PC-9 (cell line): ENCODE measurements at regions of chr13 and their contacts with region 1.

Region 1: GRCh38 chr13:109998726-109999533 is 212.5 kb upstream of the IRS2 start:
- DNase-seq: peak; percentile 71 to 100
- H3K4me3 ChIP-seq: peak overlapping the region; percentile 1; the same call in 1 of the 2 replicates
- H3K27ac ChIP-seq: peak overlapping the region; percentile 45
- H3K4me1 ChIP-seq: peaks cover 50% of the 10 kb centered on the region
- H3K27me3 ChIP-seq: no peaks in the 10 kb centered on the region
- CTCF ChIP-seq: peak; percentile 33; the same call in 1 of the 2 replicates

Region 2: DNA sequence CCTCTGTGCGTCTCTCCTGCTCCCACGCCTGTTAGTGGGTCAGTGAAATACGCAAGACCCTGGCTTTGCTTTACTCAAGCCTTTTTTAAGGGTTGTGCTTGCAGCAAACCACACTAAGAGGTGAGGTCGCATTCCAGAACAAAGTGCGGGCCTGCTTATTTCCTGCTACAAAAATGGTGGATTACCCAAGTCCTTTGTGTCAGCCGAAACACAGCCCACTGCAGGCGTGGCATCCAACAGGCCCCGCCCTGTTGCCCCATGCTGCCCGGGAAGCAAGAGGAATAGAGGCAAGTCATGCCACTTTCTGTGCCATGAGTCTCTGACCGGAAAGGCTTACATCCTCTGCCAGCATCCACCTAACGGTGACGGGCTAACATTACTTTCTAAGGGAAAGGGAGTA is 204.8 kb before region 1 on chr13:
- CTCF ChIA-PET with region 1: no interaction called
- POLR2A ChIA-PET with region 1: no interaction called
- intact Hi-C with region 1: loop called (anchors 2 kb)
- DNase-seq: peak; percentile 39 to 82
- H3K4me3 ChIP-seq: no peak overlapping the region
- H3K27ac ChIP-seq: peak overlapping the region; percentile 13
- H3K4me1 ChIP-seq: peaks cover 64% of the 10 kb centered on the region
- H3K27me3 ChIP-seq: no peaks in the 10 kb centered on the region
- CTCF ChIP-seq: no peak

Region 3: GRCh38 chr13:109862627-109863026 is 136.3 kb before region 1 on chr13:
- CTCF ChIA-PET with region 1: no interaction called
- POLR2A ChIA-PET with region 1: no interaction called
- intact Hi-C with region 1: loop called (anchors 5 kb)
- DNase-seq: peak in 1 of 2 experiments; percentile 98
- H3K4me3 ChIP-seq: peak overlapping the region; percentile 23; the same call in 1 of the 2 replicates
- H3K27ac ChIP-seq: peak overlapping the region; percentile 81
- H3K4me1 ChIP-seq: peaks cover 79% of the 10 kb centered on the region
- H3K27me3 ChIP-seq: no peaks in the 10 kb centered on the region
- CTCF ChIP-seq: no peak

Region 4: DNA sequence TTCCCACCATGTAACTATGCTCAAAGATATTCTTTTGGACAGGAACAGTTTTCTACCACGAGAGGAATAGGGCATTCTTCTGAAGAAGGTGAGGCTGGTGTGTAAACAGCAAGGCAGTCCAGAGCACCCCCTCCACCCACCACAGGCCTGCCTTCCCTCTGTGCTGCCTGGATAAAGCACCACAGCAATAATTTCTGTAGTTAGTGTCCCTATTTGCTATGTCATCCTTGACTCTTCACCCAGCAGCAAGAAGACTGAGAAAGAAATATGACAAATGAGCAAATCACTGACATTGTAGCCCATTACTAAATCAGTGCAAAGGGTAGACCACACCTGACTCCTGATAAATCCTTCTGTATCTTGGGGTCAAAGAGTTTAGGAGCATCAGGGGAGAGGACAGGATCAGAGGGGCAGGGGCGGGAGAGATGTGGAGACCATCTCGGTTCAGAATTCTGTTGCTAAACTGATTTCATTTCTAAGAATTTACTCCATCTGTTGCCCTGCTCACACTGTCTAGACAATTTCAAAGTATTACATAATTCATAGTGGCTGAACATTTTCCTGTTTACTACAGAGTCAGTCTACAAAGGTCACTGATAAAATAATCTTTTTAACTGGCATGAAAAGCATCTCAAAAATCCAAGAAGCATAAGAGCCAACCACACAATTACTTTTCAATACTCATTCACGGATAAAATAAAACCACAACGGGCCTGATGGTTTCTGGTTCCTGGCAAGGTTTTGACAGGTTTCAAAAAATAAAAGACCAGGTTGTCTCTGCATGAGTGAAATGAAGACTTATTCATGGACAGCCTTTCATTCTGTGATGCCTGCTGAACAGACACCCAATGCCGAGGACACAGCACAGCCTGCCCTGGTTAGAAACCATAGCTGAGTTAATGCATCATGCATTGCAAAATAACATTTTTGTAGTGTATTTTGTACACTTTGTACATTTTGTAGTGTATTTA is 124.2 kb before region 1 on chr13:
- CTCF ChIA-PET with region 1: no interaction called
- POLR2A ChIA-PET with region 1: no interaction called
- intact Hi-C with region 1: loop called (anchors 1 kb)
- DNase-seq: peak; percentile 32 to 90
- H3K4me3 ChIP-seq: peak overlapping the region; percentile 4; the same call in 1 of the 2 replicates
- H3K27ac ChIP-seq: peak overlapping the region; percentile 84
- H3K4me1 ChIP-seq: peaks cover 76% of the 10 kb centered on the region
- H3K27me3 ChIP-seq: no peaks in the 10 kb centered on the region
- CTCF ChIP-seq: no peak

Region 5: DNA sequence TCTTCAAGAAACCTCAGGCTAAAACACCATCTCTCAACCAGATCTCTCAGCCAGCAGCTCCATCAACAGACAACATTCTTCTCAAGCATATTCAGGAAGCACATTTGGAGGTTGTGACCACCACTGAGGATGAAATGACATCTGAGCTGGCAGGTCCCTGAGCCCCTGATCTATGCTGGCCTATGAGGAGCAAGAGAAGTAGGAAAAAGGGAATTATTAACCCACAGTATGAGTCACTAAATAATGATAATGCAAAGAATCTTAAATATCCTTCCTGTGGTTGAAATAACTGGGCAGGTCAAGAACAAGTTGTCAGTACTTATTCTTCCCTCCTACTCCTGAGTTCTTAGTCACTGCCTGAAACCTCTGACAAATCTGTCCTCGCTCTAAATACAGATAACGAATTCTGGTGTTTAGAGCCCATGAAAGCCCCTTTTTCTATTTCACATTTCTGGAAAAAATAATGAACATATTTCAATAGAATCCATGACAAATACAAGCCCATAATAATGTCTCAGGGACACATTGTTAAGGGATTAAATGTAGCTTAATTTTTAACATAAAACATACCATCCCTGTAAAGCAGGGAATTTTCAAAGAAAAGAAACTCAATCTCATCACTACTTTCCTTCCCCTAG is 13.3 kb after region 1 on chr13:
- CTCF ChIA-PET with region 1: no interaction called
- POLR2A ChIA-PET with region 1: no interaction called
- intact Hi-C with region 1: loop called (anchors 1 kb)
- DNase-seq: peak; percentile 77 to 99
- H3K4me3 ChIP-seq: 0 out of 2 replicates have a peak overlapping the region, but pooled peaks have one; percentile 4
- H3K27ac ChIP-seq: peak overlapping the region; percentile 91
- H3K4me1 ChIP-seq: peaks cover 49% of the 10 kb centered on the region
- H3K27me3 ChIP-seq: no peaks in the 10 kb centered on the region
- CTCF ChIP-seq: no peak

Region 6: DNA sequence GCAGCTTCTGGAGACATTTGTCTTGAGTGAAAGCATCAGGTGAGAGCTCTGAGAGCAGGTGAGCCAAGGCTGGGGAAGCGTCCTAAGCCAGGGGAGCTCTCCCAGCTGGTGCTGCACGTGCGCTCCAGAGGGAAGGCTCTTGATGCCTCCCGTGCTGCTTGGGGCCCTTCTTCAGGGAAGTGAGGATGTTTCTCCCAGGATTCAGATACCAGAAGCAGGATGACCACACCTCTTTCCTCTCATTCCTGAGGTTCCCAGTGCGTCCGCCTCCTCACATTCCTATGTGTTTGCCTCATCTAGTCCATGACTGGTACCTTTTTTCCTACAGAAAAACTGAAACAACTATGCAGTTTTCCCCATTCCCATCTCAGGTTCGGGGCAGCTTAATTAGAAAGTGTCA is 18.4 kb after region 1 on chr13:
- CTCF ChIA-PET with region 1: no interaction called
- POLR2A ChIA-PET with region 1: no interaction called
- intact Hi-C with region 1: loop called (anchors 1 kb)
- DNase-seq: peak; percentile 69 to 88
- H3K4me3 ChIP-seq: no peak overlapping the region
- H3K27ac ChIP-seq: peak overlapping the region; percentile 65
- H3K4me1 ChIP-seq: peaks cover 38% of the 10 kb centered on the region
- H3K27me3 ChIP-seq: no peaks in the 10 kb centered on the region
- CTCF ChIP-seq: no peak